ENCODE measurements at regions of chr3 and their contacts with region 1.

Region 1: DNA sequence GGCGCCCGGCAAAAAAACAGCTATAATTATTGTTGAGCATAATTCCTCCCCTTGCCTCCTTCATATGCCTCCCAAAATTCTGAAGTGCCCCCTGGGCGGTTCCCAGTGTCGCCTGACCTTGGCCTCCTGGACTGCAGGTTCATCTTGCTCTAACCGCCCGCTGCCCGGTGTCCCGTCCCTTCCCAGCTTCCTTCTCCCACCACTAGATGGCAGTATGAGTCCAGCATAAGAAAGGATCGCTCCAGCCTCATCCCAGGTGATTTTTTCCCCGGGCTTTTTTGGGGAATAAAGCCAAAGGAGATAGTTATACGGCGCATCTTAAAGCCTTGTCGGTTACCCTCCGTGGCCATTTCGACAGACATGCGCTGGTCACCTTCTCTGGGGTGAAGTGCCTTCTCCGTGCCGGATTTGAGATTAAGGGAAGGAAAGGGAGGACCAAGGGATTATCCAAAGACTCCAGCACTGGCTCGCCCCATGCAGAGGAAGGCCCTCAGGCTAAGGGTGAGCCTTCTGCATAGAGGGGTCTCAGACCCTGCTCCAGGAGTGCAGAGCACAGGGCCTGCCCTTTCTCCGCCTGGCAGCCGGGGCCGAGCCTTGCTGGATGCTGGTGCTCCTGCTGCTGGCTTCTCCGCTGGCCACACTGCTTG is 45.8 kb upstream of the TRA2B start:
- DNase-seq: no peak

Region 2: DNA sequence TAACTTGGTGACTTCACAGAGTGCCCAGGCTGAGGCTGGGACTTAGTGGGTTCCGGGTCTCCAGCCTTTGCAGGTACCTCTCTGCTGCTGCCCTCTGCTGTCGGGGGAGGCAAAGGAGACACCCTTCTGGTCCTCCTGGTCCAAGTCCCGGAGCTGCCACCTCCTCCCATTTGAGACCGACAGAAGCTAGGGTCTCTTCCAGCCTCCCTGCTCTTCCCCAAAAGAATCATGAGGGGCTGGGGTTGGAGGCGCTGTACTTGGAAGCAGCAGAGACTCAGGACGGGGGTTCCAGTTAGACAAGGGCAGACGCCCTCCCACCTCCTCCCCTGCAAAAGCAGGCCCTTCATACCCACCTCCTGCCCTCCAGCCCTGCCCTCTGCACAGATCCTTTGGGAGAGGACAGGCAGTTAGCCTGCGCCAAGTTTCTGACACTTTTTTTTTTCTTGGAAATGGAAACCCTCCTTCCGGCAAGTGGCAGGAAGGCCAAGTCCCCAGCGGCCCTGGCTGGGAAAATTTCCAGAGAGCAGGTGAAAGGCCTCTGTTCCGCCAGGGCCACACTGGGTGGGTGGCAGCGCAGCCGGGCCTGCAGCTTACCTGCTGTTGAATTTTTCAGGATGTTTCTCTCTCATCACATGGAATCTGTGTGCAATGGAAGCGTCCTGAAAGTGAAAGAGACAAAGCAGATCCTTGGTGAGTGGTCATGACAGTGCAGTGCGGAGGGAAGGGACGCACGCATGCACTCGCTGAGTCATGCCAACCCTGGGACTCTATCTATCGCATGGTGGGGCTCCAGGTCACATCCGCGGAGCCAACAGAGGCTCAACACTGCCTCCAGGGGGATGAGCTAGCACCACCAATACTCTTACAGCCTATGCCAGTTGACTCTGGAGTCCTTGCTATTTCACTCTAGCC is 258.5 kb after region 1 on chr3:
- intact Hi-C with region 1: loop called (anchors 10 kb)
- DNase-seq: peak; percentile 92

Region 3: DNA sequence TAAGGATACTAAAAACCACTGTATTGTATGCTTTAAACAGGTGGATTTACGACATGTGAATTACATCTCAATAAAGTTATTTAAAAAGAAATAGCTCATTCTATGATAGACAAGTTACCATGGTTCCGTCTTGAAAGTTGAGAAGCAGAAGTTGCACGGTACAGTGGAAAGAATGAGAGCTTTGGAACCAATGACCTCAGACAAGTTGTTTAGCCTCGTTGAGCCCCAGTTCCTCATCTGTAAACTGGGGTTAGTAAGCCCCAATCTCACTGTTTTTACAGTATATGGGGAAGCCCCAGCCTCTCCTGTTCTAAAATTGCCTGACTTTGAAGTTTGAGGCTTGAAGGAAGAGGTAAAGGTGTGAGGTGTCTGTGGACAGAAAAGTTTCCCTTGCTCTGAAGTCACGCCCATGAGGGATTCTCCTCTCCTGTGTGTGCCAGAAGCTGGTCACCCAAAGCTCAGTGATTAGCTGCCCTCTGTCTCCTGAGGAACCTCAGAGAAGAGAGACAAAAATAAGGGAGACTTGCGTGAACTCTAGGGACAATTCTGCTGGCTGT is 550.6 kb after region 1 on chr3:
- intact Hi-C with region 1: loop called in 1 of 2 experiments (anchors 10 kb)
- DNase-seq: no peak

Measured in posterior vena cava (tissue), 2 donors.